ENCODE measurements at regions of chr3 and their contacts with region 1.

Region 1: GRCh38 chr3:172666873-172667694 is 43.8 kb downstream of the NCEH1 start:
- DNase-seq: no peak
- ATAC-seq: peak; percentile 69
- H3K4me3 Mint-ChIP-seq: no peak overlapping the region
- H3K27ac Mint-ChIP-seq: no peak overlapping the region
- H3K4me1 Mint-ChIP-seq: peaks cover 14% of the 10 kb centered on the region
- H3K27me3 Mint-ChIP-seq: no peaks in the 10 kb centered on the region
- CTCF ChIP-seq: no peak

Region 2: GRCh38 chr3:171703756-171704401 is 963.2 kb before region 1 on chr3:
- CTCF ChIA-PET with region 1: no interaction called
- POLR2A ChIA-PET with region 1: no interaction called
- intact Hi-C with region 1: loop called (anchors 5 kb)
- DNase-seq: no peak
- ATAC-seq: no peak
- H3K4me3 Mint-ChIP-seq: no peak overlapping the region
- H3K27ac Mint-ChIP-seq: no peak overlapping the region
- H3K4me1 Mint-ChIP-seq: no peaks in the 10 kb centered on the region
- H3K27me3 Mint-ChIP-seq: peaks cover 4% of the 10 kb centered on the region
- CTCF ChIP-seq: no peak

Region 3: DNA sequence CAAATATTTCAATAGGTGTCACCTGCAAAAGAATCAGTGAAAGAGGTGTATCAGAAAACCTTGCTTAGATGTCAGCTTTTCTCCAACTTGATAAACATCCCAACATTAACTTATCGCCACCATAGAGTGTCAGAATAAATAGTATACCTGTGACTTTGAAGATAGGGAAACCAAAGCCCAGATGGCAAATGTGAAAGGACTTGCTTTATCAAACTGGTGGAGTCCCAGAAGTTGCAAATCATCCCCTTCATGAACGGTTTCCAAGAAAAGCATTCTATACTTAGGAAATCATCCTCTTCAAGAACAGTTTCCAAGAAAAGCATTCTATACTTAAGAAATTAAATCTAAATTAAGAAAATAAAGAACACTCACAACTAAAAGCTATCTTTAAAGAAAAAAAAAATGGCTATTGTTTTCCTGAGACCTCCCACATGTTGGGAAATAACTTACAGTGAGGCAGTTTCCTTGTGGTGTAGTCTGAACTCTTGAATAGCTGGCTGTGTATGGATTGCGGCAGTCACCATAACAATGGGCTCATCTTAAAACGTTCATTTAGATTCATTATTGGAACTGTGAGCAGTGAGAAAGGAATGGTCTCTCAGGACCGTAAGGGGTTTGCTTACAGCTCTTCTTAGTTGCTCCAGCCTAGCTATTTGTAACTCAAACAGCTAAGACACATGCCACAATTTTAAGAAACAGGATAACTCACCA is 275.3 kb before region 1 on chr3:
- CTCF ChIA-PET with region 1: no interaction called
- POLR2A ChIA-PET with region 1: no interaction called
- intact Hi-C with region 1: no loop called
- DNase-seq: no peak
- ATAC-seq: no peak
- H3K4me3 Mint-ChIP-seq: no peak overlapping the region
- H3K27ac Mint-ChIP-seq: no peak overlapping the region
- H3K4me1 Mint-ChIP-seq: no peaks in the 10 kb centered on the region
- H3K27me3 Mint-ChIP-seq: no peaks in the 10 kb centered on the region
- CTCF ChIP-seq: no peak

Region 4: DNA sequence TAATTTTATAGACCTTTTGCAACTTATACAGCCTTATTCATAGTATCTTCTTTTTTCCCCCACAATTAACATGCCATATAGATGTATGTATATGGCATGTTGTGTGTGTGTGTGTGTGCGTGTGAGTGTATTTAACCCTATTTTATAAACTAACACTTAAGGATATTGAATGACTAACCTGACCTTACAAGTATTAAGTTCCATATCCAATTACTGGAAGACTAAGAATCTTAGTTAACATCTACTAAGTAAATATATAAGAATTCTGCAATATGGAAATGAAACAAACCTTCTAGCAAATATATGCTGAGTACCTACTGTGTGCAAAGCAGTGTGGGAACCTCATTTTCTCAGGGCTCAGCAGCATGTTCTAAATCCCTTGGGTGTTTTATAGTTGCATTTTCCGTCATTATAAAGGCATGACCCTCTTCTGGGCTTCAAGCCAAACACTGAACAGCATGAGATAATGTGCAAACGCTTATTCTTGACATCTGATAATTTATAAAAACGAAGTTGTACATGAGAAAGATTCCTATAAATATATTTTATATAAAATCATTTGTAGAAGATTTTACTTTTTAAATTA is 836.0 kb after region 1 on chr3:
- CTCF ChIA-PET with region 1: no interaction called
- POLR2A ChIA-PET with region 1: no interaction called
- intact Hi-C with region 1: no loop called
- DNase-seq: no peak
- ATAC-seq: no peak
- H3K4me3 Mint-ChIP-seq: no peak overlapping the region
- H3K27ac Mint-ChIP-seq: no peak overlapping the region
- H3K4me1 Mint-ChIP-seq: no peaks in the 10 kb centered on the region
- H3K27me3 Mint-ChIP-seq: no peaks in the 10 kb centered on the region
- CTCF ChIP-seq: no peak